Right ventricle myocardium superior (tissue), 1 donor: ENCODE measurements at regions of chr2 and their contacts with region 1.

Region 1: GRCh38 chr2:233033672-233034071 is 1.2 kb downstream of the NEU2 start:
- DNase-seq: no peak
- ATAC-seq: no peak

Region 2: DNA sequence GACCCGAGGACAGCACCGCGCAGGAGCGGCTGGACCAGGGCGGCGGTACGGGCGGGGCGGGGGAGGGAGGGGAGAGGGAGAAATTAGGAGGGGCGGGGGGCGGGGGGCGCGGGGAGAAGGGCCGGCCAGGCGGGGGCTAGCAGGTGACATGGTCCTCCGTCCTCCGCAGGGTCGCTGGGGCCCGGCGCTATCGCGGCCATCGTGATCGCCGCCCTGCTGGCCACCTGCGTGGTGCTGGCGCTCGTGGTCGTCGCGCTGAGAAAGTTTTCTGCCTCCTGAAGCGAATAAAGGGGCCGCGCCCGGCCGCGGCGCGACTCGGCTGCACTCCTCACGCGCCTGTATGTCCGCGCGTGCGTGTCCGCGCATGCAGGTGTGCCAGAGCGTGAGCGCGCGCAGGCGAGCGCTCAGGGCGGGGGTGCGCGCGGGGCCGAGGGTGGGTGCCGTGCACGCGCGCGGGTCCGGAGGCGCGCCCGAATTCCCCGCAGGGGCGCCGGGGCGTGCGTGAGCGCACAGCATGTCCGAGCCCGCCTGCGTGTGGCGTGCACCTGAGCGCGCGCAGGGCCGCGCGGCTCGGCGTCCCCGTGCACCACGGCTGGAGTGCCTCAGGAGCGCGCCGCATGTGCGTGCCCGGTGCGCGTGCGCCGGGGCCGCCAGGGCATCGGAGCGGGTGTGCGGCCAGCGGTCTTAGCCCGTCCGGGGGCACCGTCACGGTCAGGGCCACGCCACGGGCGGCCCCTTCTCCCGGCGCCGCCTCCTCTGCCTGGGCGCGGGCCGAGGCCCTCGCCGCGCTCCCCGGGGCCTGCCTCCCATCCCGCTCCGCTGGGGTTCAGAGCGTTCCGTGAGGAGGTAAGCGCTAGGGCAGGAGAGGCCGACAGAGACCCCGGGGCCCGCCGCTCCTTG is 157.3 kb before region 1 on chr2:
- intact Hi-C with region 1: loop called (anchors 10 kb)
- DNase-seq: no peak
- ATAC-seq: peak; percentile 18

Region 3: DNA sequence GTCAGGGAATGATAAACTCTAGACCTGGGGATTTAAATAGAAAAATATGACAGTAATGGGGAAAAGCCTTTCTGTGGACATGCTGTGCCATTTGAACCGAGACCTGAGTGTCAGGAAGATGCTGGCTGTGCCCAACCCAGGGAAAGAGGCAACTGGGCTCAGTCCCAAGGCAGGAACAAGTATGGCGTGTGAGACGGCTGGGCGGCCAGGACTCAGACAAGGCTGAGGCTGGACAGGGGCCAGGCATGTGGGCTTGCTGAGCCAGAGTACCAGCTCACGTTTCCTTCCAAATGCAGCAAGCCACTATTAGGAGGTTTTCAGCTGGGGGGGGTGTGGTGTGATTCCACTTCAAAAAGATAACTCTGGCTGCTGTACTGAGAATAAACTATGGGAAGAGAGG is 118.9 kb after region 1 on chr2:
- intact Hi-C with region 1: no loop called
- DNase-seq: peak; percentile 86
- ATAC-seq: peak; percentile 97